ENCODE measurements at regions of chr1 and their contacts with region 1.

Region 1: GRCh38 chr1:206583707-206584648 is 28.3 kb downstream of the EIF2D start:
- DNase-seq: peak; percentile 84
- ATAC-seq: peak; percentile 62

Region 2: DNA sequence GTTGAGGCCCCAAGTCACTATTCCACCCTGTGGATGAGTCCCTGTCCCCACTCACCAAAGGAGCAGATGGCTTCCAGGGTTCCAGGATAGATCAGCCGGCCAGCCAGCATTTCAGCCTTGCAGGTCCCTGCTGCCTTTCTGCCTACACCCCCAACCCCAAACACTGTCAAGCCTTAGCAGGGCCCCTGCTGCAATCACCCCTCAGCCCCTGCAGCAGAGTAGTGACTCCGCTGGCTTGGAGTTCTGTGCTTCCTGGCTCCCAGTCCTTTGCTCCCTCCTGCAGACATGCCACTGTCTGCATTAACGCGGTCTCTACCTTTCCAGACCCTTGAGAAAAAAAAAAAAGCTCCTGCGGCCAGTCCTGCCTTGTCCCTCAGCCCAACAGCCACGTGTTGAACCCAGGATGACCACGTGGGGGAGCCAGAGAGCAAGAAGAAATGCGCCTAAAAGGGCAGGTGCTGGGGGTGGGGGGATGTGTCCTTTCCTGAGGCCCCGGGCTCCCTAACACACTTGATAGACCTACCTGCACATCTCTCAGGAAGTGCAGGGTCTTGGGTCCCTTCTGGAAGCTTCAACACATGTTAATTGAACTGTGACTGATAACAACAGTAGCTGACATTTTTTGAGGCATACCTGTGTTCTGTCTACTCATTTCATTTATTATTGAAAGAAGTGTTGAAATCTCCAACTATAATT is 39.3 kb before region 1 on chr1:
- intact Hi-C with region 1: loop called (anchors 2 kb)
- DNase-seq: peak; percentile 81
- ATAC-seq: peak; percentile 84

Measured in Right ventricle myocardium superior (tissue), 1 donor.